Aorta (tissue), 5 donors: ENCODE measurements at regions of chr3 and their contacts with region 1.

Region 1: GRCh38 chr3:197354319-197355001 is 56.0 kb upstream of the DLG1 start:
- DNase-seq: peak in 1 of 2 donors; percentile 62
- ATAC-seq: peak; percentile 39
- H3K4me3 ChIP-seq: no peak overlapping the region
- H3K27ac ChIP-seq: no peak overlapping the region
- H3K4me1 ChIP-seq: no peaks in the 10 kb centered on the region
- H3K27me3 ChIP-seq: no peaks in the 10 kb centered on the region

Region 2: DNA sequence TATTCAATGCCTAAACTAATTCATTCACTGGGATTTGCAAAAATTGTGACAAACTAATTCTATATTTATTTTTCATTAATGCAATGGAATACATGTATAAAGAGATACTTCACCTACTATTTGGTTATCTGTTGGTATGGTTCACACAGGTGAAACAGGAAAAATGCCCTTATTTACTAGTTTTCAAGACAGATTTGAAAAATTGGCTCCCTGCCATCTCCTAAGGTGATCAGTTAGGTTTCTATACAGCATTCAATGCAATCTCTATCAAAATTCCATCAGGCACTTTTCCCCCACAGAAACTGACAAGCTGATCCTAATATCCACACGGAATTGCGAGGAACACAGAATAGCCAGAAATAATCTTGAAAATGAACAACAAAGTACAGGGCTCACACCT is 157.1 kb before region 1 on chr3:
- intact Hi-C with region 1: no loop called
- DNase-seq: no peak
- ATAC-seq: no peak
- H3K4me3 ChIP-seq: no peak overlapping the region
- H3K27ac ChIP-seq: no peak overlapping the region
- H3K4me1 ChIP-seq: no peaks in the 10 kb centered on the region
- H3K27me3 ChIP-seq: no peaks in the 10 kb centered on the region

Region 3: GRCh38 chr3:197305854-197306253 is 48.6 kb before region 1 on chr3:
- intact Hi-C with region 1: loop called in 1 of 2 experiments (anchors 5 kb)
- DNase-seq: no peak
- ATAC-seq: no peak
- H3K4me3 ChIP-seq: no peak overlapping the region
- H3K27ac ChIP-seq: peak overlapping the region in 1 of 2 donors; percentile 44
- H3K4me1 ChIP-seq: peaks cover 0 to 3% of the 10 kb centered on the region in 2 donors
- H3K27me3 ChIP-seq: no peaks in the 10 kb centered on the region